ENCODE measurements at regions of chr15 and their contacts with region 1.

Region 1: GRCh38 chr15:70488002-70488605 is 275.3 kb downstream of the UACA start:
- DNase-seq: peak; percentile 59 to 91 (median 72)
- H3K4me3 ChIP-seq: no peak overlapping the region
- H3K27ac ChIP-seq: no peak overlapping the region
- H3K4me1 ChIP-seq: peaks cover 0 to 10% of the 10 kb centered on the region in 2 donors
- H3K27me3 ChIP-seq: no peaks in the 10 kb centered on the region
- CTCF ChIP-seq: peak; percentile 86 to 96 (median 92)
- POLR2A ChIP-seq: no peak

Region 2: DNA sequence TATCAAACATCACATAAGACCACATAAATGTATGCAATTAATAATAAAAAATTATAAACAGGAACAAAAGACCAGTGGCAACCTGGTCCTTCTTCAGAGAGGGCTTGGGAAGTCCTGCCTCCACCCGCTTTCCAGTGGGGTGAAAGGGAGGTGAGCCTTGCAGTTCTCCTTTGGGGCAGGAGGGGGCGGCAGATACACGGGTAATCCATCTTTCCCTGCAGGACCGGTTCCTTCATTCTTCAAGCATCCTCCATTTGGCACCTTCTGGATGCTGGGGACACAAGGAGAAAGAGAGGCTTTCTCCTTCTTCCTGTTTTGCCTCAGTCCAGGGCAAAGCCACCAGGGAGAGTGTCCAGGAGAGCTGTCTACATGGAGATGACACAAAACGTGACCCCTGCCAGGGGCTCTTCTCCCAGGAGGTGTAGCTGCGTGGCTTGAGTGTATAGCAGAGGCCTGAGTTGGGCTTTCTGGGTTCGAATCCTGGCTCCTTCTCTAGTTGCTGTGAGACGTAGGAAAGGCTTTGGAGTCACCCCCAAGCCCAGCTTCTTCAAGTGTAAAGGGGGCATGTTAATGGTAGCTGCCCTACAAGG is 1012.2 kb before region 1 on chr15:
- intact Hi-C with region 1: loop called (anchors 5 to 10 kb)
- DNase-seq: peak; percentile 63 to 91 (median 78)
- H3K4me3 ChIP-seq: no peak overlapping the region
- H3K27ac ChIP-seq: no peak overlapping the region
- H3K4me1 ChIP-seq: no peaks in the 10 kb centered on the region
- H3K27me3 ChIP-seq: no peaks in the 10 kb centered on the region
- CTCF ChIP-seq: peak; percentile 83 to 95 (median 88)
- POLR2A ChIP-seq: no peak

Region 3: DNA sequence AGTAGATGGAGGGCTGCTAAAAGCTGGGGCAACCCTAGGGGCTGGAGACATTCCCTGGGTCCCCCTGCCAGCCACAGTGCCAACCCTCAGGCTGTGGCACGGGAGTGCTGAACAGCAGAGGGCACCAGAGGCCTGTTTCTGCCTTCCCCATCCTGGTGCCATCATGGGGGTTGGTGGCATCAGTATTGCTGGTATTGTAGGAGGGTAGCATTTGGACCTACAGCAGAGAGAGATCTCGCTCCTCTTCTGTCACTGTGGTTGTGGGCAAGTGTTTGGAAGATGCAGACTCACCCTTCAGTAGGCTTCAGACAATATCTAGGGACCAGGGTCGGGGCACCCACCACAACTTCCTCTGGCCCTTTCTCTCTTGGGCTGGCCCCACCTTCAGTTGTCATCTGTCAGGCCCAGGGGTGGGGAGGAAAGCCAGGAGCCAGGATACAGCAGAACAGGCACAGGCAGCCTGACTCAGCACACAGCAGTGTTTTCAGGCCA is 912.0 kb before region 1 on chr15:
- intact Hi-C with region 1: loop called in 1 of 2 experiments (anchors 10 kb)
- DNase-seq: peak; percentile 32 to 75 (median 59)
- H3K4me3 ChIP-seq: no peak overlapping the region
- H3K27ac ChIP-seq: no peak overlapping the region
- H3K4me1 ChIP-seq: peaks cover 0 to 6% of the 10 kb centered on the region in 2 donors
- H3K27me3 ChIP-seq: no peaks in the 10 kb centered on the region
- CTCF ChIP-seq: peak; percentile 46 to 77 (median 73)
- POLR2A ChIP-seq: no peak

Measured in adrenal gland (tissue), 19 donors.